ENCODE measurements at regions of chr18 and their contacts with region 1.

Region 1: GRCh38 chr18:12862467-12862866 is 21.6 kb downstream of the PTPN2 start:
- DNase-seq: no peak
- CTCF ChIP-seq: no peak

Region 2: DNA sequence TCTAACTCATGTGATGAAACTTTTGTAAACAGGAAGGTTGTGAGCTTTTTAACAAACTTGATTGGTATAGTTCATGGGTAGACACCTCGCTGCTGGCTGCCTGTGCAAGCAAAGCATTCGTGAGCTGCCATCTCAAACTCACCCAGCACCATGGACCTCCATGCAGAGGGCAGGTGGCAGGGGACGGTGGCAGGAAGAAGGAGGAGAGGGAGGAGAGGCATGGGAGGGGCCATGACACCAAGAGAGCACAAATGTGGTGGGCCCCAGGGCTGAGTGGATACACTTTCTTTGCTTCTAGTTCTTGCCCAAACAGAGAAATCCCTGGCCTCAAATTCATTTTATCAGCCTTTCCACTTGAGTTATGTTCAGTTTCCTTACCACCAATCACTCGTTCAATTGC is 514.6 kb before region 1 on chr18:
- CTCF ChIA-PET with region 1: no interaction called
- POLR2A ChIA-PET with region 1: no interaction called
- DNase-seq: no peak
- CTCF ChIP-seq: no peak

Region 3: GRCh38 chr18:12843420-12844350 is 18.8 kb before region 1 on chr18:
- CTCF ChIA-PET with region 1: interaction called, 14 read pairs
- POLR2A ChIA-PET with region 1: interaction called, 3 read pairs
- DNase-seq: no peak
- CTCF ChIP-seq: no peak

Region 4: DNA sequence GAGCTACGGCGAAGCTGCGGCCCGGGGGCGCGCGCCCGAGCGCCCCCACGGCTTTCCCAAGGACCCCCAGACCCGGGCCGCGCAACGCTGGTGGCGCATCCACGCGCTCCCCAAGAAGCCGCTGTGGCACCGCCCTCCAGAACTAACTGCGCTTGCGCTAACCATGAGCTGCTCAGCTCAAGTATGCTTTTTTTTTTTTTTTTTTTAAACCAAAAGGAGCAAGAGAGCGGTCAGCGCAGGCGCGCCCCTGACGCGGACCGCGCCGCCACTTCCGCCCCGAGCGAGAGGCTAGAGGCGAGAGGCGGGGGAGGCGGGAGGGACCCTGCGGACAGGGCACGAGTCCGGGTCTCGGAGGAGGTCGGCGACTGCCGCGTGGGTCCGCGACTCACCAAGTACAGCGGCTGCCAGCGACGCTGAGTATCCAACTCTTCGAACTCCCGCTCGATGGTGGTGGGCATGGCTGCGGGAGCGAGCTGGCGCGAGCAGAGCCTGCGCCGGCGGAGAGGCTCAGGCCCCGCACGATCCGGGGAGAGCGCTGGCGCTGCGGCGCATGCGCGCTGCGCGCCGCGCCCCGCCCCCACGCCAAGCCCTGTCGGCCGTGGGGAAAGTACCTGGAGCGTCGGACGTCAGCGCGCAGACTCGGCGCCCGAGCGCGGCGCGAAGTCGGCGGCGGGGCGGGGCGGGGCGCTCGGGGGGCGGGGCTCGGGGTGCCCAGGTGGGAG is 21.4 kb after region 1 on chr18 and contains the start of gene PTPN2:
- CTCF ChIA-PET with region 1: interaction called, 21 read pairs
- POLR2A ChIA-PET with region 1: interaction called, 3 read pairs
- DNase-seq: peak; percentile 95
- CTCF ChIP-seq: no peak